Activated T-helper 1 cell treated with anti-CD3 and anti-CD28 coated beads, Interleukin-12 subunit alpha, Interleukin-12 subunit beta, Interleukin-2, Interleukin-4 antibody, amounts not matched to agents 30 ng/mL and 10 ng/mL and 1 ng/mL, durations not matched to agents 14 hours and 24 hours and 36 hours (primary cell): ENCODE measurements at regions of chr14 and their contacts with region 1.

Region 1: GRCh38 chr14:91060351-91061055 is at the start of gene RPS6KA5:
- DNase-seq: peak; percentile 100
- H3K4me3 Mint-ChIP-seq: peak within 1 kb of the TSS; percentile 84
- H3K27ac Mint-ChIP-seq: peak within 1 kb of the TSS; percentile 40
- H3K4me1 Mint-ChIP-seq: peaks cover 62% of the 10 kb centered on the region
- H3K27me3 Mint-ChIP-seq: no peaks in the 10 kb centered on the region
- total RNA-seq, gene RPS6KA5: 16.6 and 16.7 TPM in 2 replicates

Region 2: DNA sequence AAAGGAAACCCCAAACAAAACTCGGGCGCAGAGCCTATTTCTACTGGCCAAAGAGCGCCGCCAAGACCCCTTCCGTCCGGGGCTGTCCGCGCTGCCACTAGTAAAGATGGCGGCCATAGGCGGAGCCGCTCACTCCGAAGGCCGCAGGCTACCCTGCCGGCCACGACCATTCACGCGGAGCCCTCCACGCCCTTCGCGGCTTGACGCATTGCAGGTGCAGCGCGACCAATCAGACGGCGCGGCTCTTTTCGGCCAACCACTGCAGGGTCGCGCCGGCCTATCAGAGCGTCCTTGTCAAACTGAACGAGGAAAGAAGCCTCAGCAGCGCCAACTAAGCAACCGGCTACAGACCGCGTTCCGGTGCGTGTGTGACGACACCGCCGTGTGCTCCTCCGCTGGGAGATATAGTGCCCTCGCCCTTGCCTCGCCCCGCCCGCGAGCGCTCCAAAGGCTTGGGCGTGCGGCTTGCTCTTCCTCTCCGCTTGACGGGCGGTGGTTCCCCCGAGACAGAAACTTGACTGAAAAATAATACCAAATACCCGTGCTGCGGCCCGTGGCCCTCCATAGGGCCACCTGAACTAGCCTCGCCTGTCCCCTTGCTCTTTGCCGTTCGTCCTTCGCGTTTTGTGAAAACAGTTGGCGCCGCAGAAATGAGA is 677.3 kb before region 1 on chr14:
- intact Hi-C with region 1: loop called (anchors 1 kb)
- DNase-seq: peak; percentile 98
- H3K4me3 Mint-ChIP-seq: no peak overlapping the region
- H3K27ac Mint-ChIP-seq: no peak overlapping the region
- H3K4me1 Mint-ChIP-seq: peaks cover 6% of the 10 kb centered on the region
- H3K27me3 Mint-ChIP-seq: peaks cover 1% of the 10 kb centered on the region

Region 3: GRCh38 chr14:90903101-90903500 is 157.4 kb before region 1 on chr14:
- intact Hi-C with region 1: loop called (anchors 1 kb)
- DNase-seq: peak; percentile 33
- H3K4me3 Mint-ChIP-seq: no peak overlapping the region
- H3K27ac Mint-ChIP-seq: no peak overlapping the region
- H3K4me1 Mint-ChIP-seq: peaks cover 35% of the 10 kb centered on the region
- H3K27me3 Mint-ChIP-seq: no peaks in the 10 kb centered on the region

Region 4: DNA sequence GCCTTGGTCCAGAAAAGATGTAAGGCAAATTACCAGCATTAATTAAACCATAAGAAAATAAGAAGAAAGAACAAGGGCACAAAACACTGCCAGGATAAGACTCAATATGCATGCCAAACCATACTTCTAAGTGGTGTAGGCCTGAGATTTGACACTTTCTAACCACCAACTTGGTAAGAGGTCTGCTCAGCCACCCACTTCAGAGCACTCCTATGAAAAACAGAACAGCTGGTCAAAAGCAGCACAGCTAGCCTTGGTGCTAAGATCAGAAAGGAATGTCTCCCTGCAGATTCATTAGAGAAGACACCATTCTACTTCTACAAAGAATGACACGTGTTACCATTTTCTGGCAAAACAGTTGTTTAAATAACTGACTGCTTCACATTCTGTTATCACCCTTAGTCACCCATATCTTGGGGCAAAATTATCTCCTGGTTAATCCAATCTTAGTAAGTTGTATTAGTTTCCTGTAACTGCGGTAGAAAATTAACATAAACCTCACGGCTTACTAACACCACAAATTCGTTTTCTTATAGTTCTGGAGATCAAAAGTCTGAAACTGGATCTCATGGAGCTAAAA is 13.2 kb before region 1 on chr14:
- intact Hi-C with region 1: loop called (anchors 1 kb)
- DNase-seq: no peak
- H3K4me3 Mint-ChIP-seq: peak overlapping the region; percentile 41
- H3K27ac Mint-ChIP-seq: peak overlapping the region; percentile 15
- H3K4me1 Mint-ChIP-seq: peaks cover 53% of the 10 kb centered on the region
- H3K27me3 Mint-ChIP-seq: no peaks in the 10 kb centered on the region

Region 5: DNA sequence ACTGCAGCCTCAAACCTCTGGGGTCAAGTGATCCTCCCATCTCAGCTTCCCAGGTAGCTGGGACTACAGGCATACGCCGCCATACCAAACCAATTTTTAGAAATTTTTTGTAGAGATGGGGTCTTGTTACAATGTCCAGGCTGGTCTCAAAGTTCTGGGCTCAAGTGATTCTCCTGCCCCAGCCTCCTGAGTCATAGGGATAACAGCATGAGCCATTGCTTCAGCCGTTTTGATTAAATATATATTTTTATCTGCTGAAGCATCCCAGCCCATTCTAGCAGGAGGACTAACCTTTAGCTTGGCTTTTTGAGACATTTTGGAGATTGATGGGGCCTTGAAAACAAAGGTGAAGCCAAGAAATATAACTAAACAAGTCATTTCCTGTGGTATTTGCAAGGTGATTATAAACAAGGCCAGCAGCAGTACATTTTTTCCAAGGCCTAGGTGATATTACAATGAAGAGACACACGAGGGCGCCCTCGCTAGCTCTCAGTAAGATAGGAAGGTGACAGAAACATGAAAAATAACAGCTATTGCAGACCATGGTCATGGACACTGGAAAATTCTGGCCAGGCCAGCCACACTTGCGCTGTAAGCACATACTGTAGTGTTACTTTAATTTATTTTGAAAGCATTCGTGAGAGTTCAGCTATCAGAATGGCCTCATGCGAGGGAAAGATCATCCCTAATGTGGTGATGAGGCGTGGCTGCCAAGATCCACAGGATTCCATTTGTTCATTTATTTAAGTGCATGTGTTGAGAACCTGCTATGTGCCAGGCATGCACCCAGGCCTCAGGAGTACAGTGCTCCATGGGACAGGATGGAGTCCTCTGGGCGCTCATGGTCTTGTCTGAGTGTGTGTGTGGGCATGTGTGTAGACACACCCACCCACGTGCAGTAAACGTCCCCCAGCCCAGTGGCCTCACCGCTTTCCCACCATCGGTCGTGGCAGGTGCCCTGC is 116.9 kb after region 1 on chr14:
- intact Hi-C with region 1: loop called (anchors 1 kb)
- DNase-seq: peak; percentile 64
- H3K4me3 Mint-ChIP-seq: no peak overlapping the region
- H3K27ac Mint-ChIP-seq: peak overlapping the region; percentile 86
- H3K4me1 Mint-ChIP-seq: peaks cover 35% of the 10 kb centered on the region
- H3K27me3 Mint-ChIP-seq: no peaks in the 10 kb centered on the region

Region 6: GRCh38 chr14:91323671-91324605 is 263.4 kb after region 1 on chr14:
- intact Hi-C with region 1: loop called (anchors 2 kb)
- DNase-seq: peak; percentile 84
- H3K4me3 Mint-ChIP-seq: peak overlapping the region; percentile 80
- H3K27ac Mint-ChIP-seq: peak overlapping the region; percentile 99
- H3K4me1 Mint-ChIP-seq: peaks cover 59% of the 10 kb centered on the region
- H3K27me3 Mint-ChIP-seq: no peaks in the 10 kb centered on the region

Region 7: DNA sequence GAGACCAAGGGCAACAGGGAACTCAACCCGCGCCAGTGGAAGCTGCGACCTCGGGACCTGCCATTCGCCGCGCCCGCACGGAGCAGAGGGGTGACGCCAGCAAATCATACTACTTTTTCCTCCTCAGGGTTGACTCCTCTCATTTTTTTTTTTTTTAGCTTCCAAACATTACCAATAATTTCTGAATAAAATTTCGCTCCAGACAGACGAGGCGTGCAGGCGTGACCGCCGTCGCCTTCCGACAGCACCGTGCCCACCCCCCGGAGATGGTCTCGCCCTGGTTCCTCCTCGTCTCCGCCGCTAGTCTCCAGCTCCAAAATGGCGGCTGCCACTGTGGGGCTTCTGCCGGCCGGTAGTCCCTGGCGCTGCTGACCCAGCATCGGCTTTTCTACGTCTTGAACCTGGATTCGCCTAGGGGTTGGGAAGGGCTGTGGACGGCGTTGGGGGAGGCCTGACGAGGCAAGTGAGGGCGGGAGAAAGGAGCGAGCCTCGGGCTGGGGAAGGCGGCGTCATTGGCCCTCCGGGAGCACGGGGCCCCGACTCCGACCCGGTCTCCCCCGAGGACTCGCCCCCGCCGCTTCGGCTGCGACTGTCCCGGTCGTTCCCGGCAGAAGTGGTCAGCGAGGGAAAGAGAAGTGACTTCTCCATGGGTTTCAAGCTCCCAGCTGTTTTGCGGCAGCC is 1061.3 kb after region 1 on chr14 and contains the starts of genes CPSF2 and NDUFB1:
- intact Hi-C with region 1: loop called (anchors 5 kb)
- DNase-seq: peak; percentile 80
- H3K4me3 Mint-ChIP-seq: peak within 1 kb of the TSS; percentile 97
- H3K27ac Mint-ChIP-seq: peak within 1 kb of the TSS; percentile 100
- H3K4me1 Mint-ChIP-seq: peaks cover 29% of the 10 kb centered on the region
- H3K27me3 Mint-ChIP-seq: no peaks in the 10 kb centered on the region
- total RNA-seq, gene CPSF2: 103 and 104 TPM in 2 replicates
- total RNA-seq, gene NDUFB1: 73.3 and 83.5 TPM in 2 replicates